Tibial artery (tissue), 4 donors: ENCODE measurements at regions of chr22 and their contacts with region 1.

Region 1: DNA sequence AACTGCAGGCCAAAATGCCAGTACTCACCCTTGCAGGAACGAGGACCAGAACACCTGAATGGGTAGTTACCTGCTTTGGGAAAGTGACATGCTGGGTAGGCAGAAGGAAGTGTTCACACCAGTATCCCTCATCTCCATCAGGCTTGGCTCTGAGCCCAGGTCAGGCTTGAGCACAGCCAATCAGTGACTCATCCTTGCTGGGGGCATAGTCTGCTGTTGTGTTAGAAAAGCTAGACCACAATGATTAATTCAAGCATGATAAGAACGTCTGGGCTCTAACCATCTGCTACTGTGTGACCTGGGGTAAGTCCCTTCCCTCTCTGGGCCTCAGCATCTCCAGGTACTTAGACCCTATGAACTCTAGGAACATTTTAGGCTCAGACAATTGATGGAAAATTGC is 450.4 kb downstream of the MIAT start:
- DNase-seq: peak; percentile 88
- H3K4me3 ChIP-seq: no peak overlapping the region
- H3K27ac ChIP-seq: peak overlapping the region; percentile 76 to 79
- H3K4me1 ChIP-seq: peaks cover 0 to 93% (median 61%) of the 10 kb centered on the region in 4 donors
- H3K27me3 ChIP-seq: no peaks in the 10 kb centered on the region
- CTCF ChIP-seq: no peak

Region 2: DNA sequence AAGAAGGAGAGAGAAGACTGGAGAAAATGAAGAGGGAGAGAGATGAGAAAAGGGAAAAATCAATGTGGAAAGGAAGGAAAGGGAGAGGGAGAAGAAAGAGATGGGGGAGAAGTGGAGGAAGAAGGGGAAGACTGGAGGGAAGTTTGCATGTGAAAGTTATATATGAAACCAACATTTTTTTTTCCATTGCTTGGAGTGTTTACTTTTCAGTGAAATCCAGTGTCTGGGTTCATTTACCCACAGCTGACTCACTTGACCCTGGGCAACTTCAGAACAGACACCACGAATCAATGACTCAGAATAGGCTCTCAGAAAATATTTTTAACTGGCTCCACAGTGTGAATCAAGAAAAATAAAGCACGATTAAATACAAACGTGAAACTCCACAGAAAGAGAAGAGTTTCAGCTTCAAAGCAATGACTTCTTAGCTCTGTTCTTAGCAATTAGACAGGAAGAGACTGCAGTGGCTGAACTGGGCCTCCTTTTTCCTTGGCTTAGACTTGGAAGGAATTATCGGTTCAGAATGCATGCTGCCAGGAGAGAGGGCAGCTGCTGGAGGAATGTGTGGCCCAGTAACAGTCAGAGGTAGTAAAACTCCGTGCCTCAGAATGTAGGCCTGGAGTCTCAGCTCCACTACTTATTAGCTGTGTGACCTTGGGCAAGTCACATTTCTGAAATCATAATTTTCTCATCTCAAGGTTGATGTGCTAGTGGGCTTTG is 212.9 kb before region 1 on chr22:
- intact Hi-C with region 1: loop called (anchors 10 kb)
- DNase-seq: peak in 1 of 2 donors; percentile 49
- H3K4me3 ChIP-seq: no peak overlapping the region
- H3K27ac ChIP-seq: peak overlapping the region; percentile 80 to 87
- H3K4me1 ChIP-seq: peaks cover 0 to 70% (median 38%) of the 10 kb centered on the region in 4 donors
- H3K27me3 ChIP-seq: no peaks in the 10 kb centered on the region
- CTCF ChIP-seq: peak in 1 of 2 experiments; percentile 2

Region 3: DNA sequence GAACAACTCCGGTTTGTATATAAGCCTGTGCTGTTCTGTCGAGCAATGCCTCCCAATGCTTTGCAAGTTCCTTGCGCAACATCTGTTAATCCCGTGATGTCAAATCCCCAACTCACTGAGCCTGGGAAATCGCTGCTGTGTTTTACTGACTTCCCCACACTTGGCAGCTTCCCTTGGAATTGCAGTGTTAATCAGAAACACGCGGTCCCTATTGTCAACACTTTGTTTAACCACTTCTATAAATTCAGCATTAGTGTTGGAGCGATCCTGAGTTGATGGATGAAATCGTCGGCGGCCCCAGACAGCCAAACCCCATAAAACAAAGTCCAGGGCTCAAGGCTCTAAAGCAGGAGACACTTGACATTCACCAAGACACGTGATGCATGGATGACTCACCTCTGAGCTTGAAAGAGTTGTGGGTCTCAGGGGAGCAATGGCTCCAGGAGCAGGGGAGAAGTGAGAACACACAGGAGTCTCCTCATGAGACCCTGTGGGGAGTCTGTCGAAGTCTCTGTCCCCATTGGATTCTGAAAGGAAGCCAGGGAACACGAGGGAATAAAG is 104.9 kb after region 1 on chr22:
- intact Hi-C with region 1: loop called (anchors 5 kb)
- DNase-seq: peak; percentile 95
- H3K4me3 ChIP-seq: no peak overlapping the region
- H3K27ac ChIP-seq: peak overlapping the region; percentile 65 to 83
- H3K4me1 ChIP-seq: peaks cover 13 to 44% (median 24%) of the 10 kb centered on the region in 4 donors
- H3K27me3 ChIP-seq: no peaks in the 10 kb centered on the region
- CTCF ChIP-seq: no peak